ENCODE measurements at regions of chr11 and their contacts with region 1.

Region 1: DNA sequence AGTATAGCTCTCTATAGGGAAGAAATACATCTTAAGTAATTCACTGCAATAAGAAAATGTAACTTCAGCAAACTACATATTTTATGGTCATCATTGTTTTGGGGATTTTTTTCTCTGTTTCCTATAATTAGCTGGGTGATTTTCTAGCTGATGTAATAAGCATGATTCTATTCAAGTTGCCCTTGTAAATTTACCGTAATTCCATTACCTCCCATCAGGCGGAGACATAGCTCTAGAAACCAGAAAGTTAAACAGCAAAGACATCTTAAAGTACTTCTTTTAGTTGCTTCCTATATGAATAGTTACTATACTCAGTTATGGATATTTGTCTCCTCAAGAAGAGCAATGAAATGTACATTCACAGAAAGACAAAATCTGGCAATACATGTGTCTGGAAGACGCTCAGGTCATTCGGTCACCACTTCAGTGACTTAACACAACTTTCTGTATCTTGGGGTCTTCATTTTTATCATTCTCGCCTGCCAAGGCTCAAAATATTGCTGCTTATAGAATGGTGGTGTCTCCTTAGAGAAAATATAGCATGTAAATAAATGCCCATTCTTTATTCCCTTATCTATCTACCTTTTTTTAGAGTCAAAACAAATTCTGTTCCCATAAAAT is 239.9 kb upstream of the ZC3H12C start:
- DNase-seq: peak; percentile 74
- ATAC-seq: peak; percentile 70; the same call in 1 of the 2 replicates
- H3K4me3 ChIP-seq: no peak overlapping the region
- H3K27ac ChIP-seq: no peak overlapping the region; the same call in 1 of the 2 replicates
- H3K4me1 ChIP-seq: no peaks in the 10 kb centered on the region
- H3K27me3 ChIP-seq: no peaks in the 10 kb centered on the region; the same call in 1 of the 2 replicates
- CTCF ChIP-seq: peak; percentile 70; the same call in 1 of the 2 replicates

Region 2: GRCh38 chr11:109926941-109927340 is 73.7 kb after region 1 on chr11:
- CTCF ChIA-PET with region 1: no interaction called
- POLR2A ChIA-PET with region 1: no interaction called
- in situ Hi-C with region 1: no loop called
- intact Hi-C with region 1: no loop called
- DNase-seq: no peak
- ATAC-seq: no peak
- H3K4me3 ChIP-seq: no peak overlapping the region
- H3K27ac ChIP-seq: no peak overlapping the region
- H3K4me1 ChIP-seq: no peaks in the 10 kb centered on the region
- H3K27me3 ChIP-seq: no peaks in the 10 kb centered on the region; the same call in 1 of the 2 replicates
- CTCF ChIP-seq: no peak

Region 3: DNA sequence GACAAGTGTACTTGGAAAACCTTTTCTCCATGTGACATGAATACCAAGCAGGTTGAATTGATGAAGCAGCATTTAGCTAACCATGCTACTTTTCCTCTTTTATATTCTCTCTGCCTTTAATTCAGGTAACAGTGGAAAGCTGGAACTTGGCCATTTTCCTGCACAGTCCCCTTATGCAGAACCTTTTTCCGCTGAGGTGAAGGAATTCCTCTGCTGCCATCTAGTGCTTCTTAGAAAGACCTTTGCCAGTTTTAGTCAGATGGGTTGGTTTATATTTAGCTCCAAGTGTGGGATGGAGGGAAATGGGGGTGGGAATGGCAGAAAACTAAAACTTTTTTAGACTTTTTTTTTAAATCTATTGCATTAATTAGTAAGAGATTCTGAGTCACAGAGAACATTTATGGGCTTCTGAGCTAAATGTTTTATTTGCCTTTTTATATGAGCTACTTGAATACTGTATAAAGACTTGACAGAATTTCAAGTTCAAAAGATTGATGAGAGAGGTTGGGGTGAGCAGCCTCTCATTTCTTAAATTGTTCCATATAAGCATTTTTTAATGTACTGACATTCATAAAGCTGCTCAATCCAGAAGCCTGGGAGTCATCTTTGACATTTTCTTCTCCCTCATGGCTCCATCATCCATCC is 86.0 kb after region 1 on chr11:
- CTCF ChIA-PET with region 1: interaction called, 9 read pairs
- POLR2A ChIA-PET with region 1: no interaction called
- in situ Hi-C with region 1: no loop called
- intact Hi-C with region 1: loop called (anchors 1 kb)
- DNase-seq: peak; percentile 67
- ATAC-seq: peak; percentile 97
- H3K4me3 ChIP-seq: no peak overlapping the region
- H3K27ac ChIP-seq: no peak overlapping the region
- H3K4me1 ChIP-seq: no peaks in the 10 kb centered on the region
- H3K27me3 ChIP-seq: peaks cover 7% of the 10 kb centered on the region; the same call in 1 of the 2 replicates
- CTCF ChIP-seq: peak; percentile 83

Measured in Panc1 (cell line).